ENCODE measurements at regions of chr11 and their contacts with region 1.

Region 1: GRCh38 chr11:9825315-9825714 is 161.4 kb downstream of the SWAP70 start:
- DNase-seq: no peak
- ATAC-seq: no peak
- H3K4me3 ChIP-seq: no peak overlapping the region
- H3K27ac ChIP-seq: no peak overlapping the region
- H3K4me1 ChIP-seq: no peaks in the 10 kb centered on the region
- H3K27me3 ChIP-seq: no peaks in the 10 kb centered on the region
- CTCF ChIP-seq: no peak

Region 2: GRCh38 chr11:9550191-9550628 is 275.1 kb before region 1 on chr11:
- intact Hi-C with region 1: no loop called
- DNase-seq: no peak
- ATAC-seq: no peak
- H3K4me3 ChIP-seq: no peak overlapping the region
- H3K27ac ChIP-seq: no peak overlapping the region
- H3K4me1 ChIP-seq: no peaks in the 10 kb centered on the region
- H3K27me3 ChIP-seq: no peaks in the 10 kb centered on the region
- CTCF ChIP-seq: no peak

Region 3: DNA sequence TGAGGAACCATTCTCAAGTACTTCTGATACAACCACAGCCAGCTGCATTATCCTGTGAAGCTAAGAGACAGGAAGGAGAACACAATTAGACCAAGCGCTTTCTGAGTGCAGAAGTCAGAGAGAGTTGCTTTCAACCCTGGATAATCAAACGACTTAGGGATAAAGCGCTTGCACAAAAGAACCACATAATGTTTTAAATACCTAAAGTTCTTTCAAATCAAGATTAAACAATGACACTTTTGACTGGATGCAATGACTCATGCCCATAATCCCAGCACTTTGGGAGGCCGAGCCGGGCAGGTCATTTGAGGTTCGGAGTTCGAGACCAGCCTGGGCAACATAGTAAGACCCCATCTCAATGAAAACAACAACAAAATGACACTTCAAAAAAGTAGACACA is 16.4 kb before region 1 on chr11:
- intact Hi-C with region 1: loop called in 1 of 2 experiments (anchors 1 kb)
- DNase-seq: no peak
- ATAC-seq: no peak
- H3K4me3 ChIP-seq: no peak overlapping the region
- H3K27ac ChIP-seq: no peak overlapping the region
- H3K4me1 ChIP-seq: peaks cover 7% of the 10 kb centered on the region
- H3K27me3 ChIP-seq: no peaks in the 10 kb centered on the region
- CTCF ChIP-seq: no peak

Measured in psoas muscle (tissue), 8 donors.